A673 (cell line): ENCODE measurements at regions of chr3 and their contacts with region 1.

Region 1: DNA sequence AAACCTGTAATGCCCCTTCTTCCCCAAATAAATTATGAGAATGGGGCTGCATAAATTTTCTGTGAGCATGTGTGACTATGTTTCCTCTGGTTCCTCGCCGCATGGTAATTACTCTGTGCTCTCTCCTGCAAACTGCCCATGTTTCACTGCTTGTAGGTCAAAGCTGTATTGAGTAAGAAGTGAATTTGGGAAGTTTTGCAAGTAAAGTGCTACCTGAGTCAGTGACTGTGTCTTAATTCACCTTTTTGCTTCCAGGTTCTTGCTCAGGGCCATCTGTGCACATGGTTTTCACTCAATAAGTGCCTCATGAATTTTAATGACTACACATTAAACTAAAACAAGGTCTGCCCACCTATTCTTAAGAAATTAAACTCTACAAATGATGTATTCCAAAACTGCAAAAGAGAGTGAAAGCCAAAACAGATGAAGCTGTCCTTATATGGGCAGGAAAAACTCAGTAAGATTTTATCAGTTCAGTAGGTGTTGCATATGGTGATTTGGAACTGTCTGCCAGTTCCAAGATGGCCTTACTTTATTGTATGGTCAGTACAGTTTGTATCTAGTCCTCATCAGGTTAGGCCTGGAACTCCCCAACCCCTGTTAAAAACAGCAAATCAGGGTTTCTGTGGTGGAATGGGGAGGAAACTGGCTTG is 100.0 kb downstream of the LPP start:
- DNase-seq: no peak
- H3K4me3 ChIP-seq: no peak overlapping the region
- H3K27ac ChIP-seq: no peak overlapping the region
- H3K4me1 ChIP-seq: no peaks in the 10 kb centered on the region
- H3K27me3 ChIP-seq: no peaks in the 10 kb centered on the region
- CTCF ChIP-seq: no peak

Region 2: GRCh38 chr3:187758318-187758955 is 495.5 kb before region 1 on chr3:
- CTCF ChIA-PET with region 1: no interaction called
- POLR2A ChIA-PET with region 1: no interaction called
- intact Hi-C with region 1: no loop called
- DNase-seq: no peak
- H3K4me3 ChIP-seq: no peak overlapping the region
- H3K27ac ChIP-seq: no peak overlapping the region
- H3K4me1 ChIP-seq: no peaks in the 10 kb centered on the region
- H3K27me3 ChIP-seq: no peaks in the 10 kb centered on the region
- CTCF ChIP-seq: no peak

Region 3: DNA sequence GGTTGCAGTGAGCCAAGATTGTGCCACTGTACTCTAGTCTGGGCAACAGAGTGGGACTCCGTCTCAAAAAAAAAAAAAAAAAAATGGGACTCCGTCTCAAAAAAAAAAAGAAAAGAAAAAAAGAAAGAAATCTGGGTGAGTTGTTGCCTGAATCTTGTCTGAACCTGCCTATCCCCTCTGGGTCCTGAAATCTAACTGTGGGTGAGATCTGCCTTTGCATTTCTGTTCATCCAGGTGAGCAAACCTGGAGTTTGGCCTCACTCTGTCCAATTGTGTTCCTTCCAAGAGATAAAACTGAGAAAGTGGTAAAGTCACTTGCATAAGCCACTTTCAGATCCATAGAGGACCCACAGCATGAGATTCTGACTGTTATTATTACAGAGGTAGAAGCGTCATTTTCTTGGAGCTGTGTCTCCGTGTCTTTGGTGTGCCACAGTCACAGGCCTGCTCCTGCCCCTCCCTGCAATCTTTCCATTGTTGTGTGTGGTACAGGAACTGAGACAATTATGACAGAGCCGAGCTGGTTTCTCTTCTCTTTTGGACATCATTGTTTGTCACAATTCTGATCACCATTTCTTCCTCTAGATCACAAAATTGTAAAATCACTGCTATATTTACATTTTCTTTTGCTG is 135.9 kb after region 1 on chr3:
- CTCF ChIA-PET with region 1: no interaction called
- POLR2A ChIA-PET with region 1: interaction called, 10 read pairs
- intact Hi-C with region 1: no loop called
- DNase-seq: no peak
- H3K4me3 ChIP-seq: no peak overlapping the region
- H3K27ac ChIP-seq: no peak overlapping the region
- H3K4me1 ChIP-seq: no peaks in the 10 kb centered on the region
- H3K27me3 ChIP-seq: no peaks in the 10 kb centered on the region
- CTCF ChIP-seq: no peak

Region 4: DNA sequence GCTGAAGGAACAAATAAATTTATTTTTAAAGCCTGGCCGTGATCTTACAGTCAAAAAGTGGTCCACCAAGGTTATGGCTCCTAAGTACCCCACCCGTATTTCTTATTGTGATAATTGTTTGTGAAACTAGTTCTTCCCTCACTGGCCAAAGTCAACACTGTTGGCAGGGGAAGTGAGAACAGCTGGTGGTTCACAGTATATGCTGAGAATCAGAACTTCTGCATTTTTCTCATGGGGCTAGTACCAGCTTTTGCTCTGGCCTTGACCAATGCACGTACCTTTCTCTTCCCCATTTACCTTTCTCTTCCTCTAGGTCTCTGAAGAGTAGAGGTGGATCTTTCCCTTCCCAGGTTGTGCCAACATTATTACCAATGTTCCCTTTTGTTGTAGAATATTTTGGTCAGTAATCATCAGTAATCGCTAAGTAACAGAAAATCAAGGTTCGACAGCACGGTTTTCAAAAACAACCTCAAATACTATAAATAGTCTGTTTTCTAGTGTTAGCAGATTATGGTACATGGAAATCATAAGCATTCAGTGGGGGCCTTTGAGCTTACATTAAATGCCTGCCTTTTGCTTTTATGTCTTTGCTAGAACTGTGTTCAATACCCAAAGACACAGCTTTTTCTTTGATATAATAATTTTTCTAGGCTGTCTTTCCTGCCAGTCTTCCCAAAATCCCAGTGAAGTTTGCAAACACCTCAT is 168.1 kb after region 1 on chr3:
- CTCF ChIA-PET with region 1: no interaction called
- POLR2A ChIA-PET with region 1: no interaction called
- intact Hi-C with region 1: no loop called
- DNase-seq: no peak
- H3K4me3 ChIP-seq: no peak overlapping the region
- H3K27ac ChIP-seq: no peak overlapping the region
- H3K4me1 ChIP-seq: no peaks in the 10 kb centered on the region
- H3K27me3 ChIP-seq: no peaks in the 10 kb centered on the region
- CTCF ChIP-seq: no peak